ENCODE measurements at regions of chr1 and their contacts with region 1.

Region 1: GRCh38 chr1:151372061-151372934 is at the start of gene SELENBP1:
- DNase-seq: peak; percentile 94
- H3K4me3 Mint-ChIP-seq: peak within 1 kb of the TSS; percentile 69
- H3K27ac Mint-ChIP-seq: peak within 1 kb of the TSS; percentile 13
- H3K4me1 Mint-ChIP-seq: peaks cover 25% of the 10 kb centered on the region
- H3K27me3 Mint-ChIP-seq: peaks cover 7% of the 10 kb centered on the region
- CTCF ChIP-seq: no peak
- total RNA-seq, gene SELENBP1: 8.2 and 11.6 TPM in 2 replicates

Region 2: GRCh38 chr1:151340870-151341754 is 31.2 kb before region 1 on chr1:
- CTCF ChIA-PET with region 1: interaction called, 28 read pairs
- POLR2A ChIA-PET with region 1: interaction called, 12 read pairs
- intact Hi-C with region 1: loop called (anchors 2 kb)
- DNase-seq: peak; percentile 94
- H3K4me3 Mint-ChIP-seq: no peak overlapping the region
- H3K27ac Mint-ChIP-seq: no peak overlapping the region
- H3K4me1 Mint-ChIP-seq: peaks cover 11% of the 10 kb centered on the region
- H3K27me3 Mint-ChIP-seq: no peaks in the 10 kb centered on the region
- CTCF ChIP-seq: peak; percentile 74

Region 3: GRCh38 chr1:151352006-151352689 is 20.1 kb before region 1 on chr1:
- CTCF ChIA-PET with region 1: interaction called, 4 read pairs
- POLR2A ChIA-PET with region 1: interaction called, 30 read pairs
- intact Hi-C with region 1: loop called (anchors 2 kb)
- DNase-seq: peak; percentile 97
- H3K4me3 Mint-ChIP-seq: no peak overlapping the region
- H3K27ac Mint-ChIP-seq: peak overlapping the region; percentile 8
- H3K4me1 Mint-ChIP-seq: peaks cover 14% of the 10 kb centered on the region
- H3K27me3 Mint-ChIP-seq: no peaks in the 10 kb centered on the region
- CTCF ChIP-seq: no peak

Region 4: GRCh38 chr1:151393583-151393982 is 21.3 kb after region 1 on chr1:
- CTCF ChIA-PET with region 1: interaction called, 3 read pairs
- POLR2A ChIA-PET with region 1: interaction called, 60 read pairs
- intact Hi-C with region 1: no loop called
- DNase-seq: no peak
- H3K4me3 Mint-ChIP-seq: no peak overlapping the region
- H3K27ac Mint-ChIP-seq: no peak overlapping the region
- H3K4me1 Mint-ChIP-seq: no peaks in the 10 kb centered on the region
- H3K27me3 Mint-ChIP-seq: no peaks in the 10 kb centered on the region
- CTCF ChIP-seq: no peak